ENCODE measurements at regions of chr2 and their contacts with region 1.

Region 1: GRCh38 chr2:196068271-196069209 is at the start of gene DNAH7:
- DNase-seq: peak; percentile 88
- H3K4me3 Mint-ChIP-seq: peak within 1 kb of the TSS; percentile 87
- H3K27ac Mint-ChIP-seq: peak within 1 kb of the TSS; percentile 89
- H3K4me1 Mint-ChIP-seq: peaks cover 15% of the 10 kb centered on the region
- H3K27me3 Mint-ChIP-seq: peaks cover 32% of the 10 kb centered on the region
- total RNA-seq, gene DNAH7: not detected in 2 replicates

Region 2: DNA sequence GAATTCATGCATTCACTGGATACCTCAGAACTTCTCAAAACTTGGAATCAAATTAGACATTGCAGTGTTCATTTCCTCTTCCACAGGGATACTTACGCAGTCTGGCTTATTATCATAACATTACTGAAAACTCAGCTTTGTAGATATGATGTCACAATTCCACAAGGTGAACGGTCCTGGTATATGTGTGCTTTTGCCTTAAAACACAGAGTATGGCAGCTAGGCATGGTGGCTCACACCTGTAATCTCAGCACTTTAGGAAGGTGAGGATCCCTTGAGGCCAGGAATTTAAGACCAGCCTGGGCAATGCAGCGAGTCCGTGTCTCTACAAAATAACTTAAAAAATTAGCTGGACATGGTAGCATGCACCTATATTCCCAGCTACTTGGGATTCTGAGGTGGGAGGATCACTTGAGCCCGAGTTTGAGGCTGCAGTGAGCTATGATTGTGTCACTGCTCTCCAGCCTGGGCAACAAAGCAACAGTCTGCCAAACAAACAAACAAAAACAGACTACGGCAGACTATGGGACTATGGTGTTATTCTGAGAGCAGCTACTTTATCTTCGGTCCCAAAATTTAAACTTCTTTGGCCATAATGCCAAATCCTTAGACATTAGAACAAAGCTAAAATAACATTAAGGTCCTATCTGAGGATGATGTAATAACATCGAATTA is 1603.4 kb before region 1 on chr2:
- intact Hi-C with region 1: loop called (anchors 5 kb)
- DNase-seq: no peak
- H3K4me3 Mint-ChIP-seq: no peak overlapping the region
- H3K27ac Mint-ChIP-seq: no peak overlapping the region
- H3K4me1 Mint-ChIP-seq: no peaks in the 10 kb centered on the region
- H3K27me3 Mint-ChIP-seq: no peaks in the 10 kb centered on the region

Region 3: GRCh38 chr2:195318440-195319111 is 750.0 kb before region 1 on chr2:
- intact Hi-C with region 1: loop called (anchors 2 kb)
- DNase-seq: peak; percentile 20
- H3K4me3 Mint-ChIP-seq: no peak overlapping the region
- H3K27ac Mint-ChIP-seq: no peak overlapping the region
- H3K4me1 Mint-ChIP-seq: peaks cover 23% of the 10 kb centered on the region
- H3K27me3 Mint-ChIP-seq: no peaks in the 10 kb centered on the region

Region 4: GRCh38 chr2:195575879-195576401 is 492.6 kb before region 1 on chr2:
- intact Hi-C with region 1: loop called (anchors 10 kb)
- DNase-seq: no peak
- H3K4me3 Mint-ChIP-seq: no peak overlapping the region
- H3K27ac Mint-ChIP-seq: peak overlapping the region; percentile 13
- H3K4me1 Mint-ChIP-seq: peaks cover 58% of the 10 kb centered on the region
- H3K27me3 Mint-ChIP-seq: no peaks in the 10 kb centered on the region

Region 5: GRCh38 chr2:196639180-196640030 is 570.9 kb after region 1 on chr2 and contains the start of gene CCDC150:
- intact Hi-C with region 1: loop called (anchors 1 kb)
- DNase-seq: peak; percentile 93
- H3K4me3 Mint-ChIP-seq: peak within 1 kb of the TSS; percentile 78
- H3K27ac Mint-ChIP-seq: peak within 1 kb of the TSS; percentile 81
- H3K4me1 Mint-ChIP-seq: peaks cover 28% of the 10 kb centered on the region
- H3K27me3 Mint-ChIP-seq: peaks cover 13% of the 10 kb centered on the region
- total RNA-seq, gene CCDC150: 16.7 and 19.6 TPM in 2 replicates